ENCODE measurements at regions of chr1 and their contacts with region 1.

Region 1: DNA sequence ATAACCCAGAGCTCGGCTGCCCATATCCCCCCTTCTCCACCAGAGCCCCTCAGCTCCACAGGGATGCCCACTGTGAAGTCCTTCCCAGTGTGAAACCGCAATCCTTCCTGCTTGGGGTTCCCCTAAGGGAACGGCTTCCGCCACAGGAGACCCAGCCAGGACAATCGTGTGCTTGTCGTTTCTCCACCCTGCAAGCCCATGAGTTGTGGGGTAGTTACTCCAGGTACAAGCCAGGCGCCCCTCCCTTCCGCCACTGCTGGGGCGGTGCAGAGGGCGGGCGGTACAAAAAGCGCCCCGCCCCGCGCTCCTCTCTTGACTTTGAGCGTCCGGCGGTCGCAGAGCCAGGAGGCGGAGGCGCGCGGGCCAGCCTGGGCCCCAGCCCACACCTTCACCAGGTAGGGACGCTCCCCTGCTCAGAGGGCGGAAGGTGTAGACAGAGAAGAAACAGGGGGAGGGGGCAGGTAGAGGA is at the start of gene TINAGL1:
- DNase-seq: peak; percentile 83
- total RNA-seq, gene TINAGL1: 110 to 123 TPM

Region 2: DNA sequence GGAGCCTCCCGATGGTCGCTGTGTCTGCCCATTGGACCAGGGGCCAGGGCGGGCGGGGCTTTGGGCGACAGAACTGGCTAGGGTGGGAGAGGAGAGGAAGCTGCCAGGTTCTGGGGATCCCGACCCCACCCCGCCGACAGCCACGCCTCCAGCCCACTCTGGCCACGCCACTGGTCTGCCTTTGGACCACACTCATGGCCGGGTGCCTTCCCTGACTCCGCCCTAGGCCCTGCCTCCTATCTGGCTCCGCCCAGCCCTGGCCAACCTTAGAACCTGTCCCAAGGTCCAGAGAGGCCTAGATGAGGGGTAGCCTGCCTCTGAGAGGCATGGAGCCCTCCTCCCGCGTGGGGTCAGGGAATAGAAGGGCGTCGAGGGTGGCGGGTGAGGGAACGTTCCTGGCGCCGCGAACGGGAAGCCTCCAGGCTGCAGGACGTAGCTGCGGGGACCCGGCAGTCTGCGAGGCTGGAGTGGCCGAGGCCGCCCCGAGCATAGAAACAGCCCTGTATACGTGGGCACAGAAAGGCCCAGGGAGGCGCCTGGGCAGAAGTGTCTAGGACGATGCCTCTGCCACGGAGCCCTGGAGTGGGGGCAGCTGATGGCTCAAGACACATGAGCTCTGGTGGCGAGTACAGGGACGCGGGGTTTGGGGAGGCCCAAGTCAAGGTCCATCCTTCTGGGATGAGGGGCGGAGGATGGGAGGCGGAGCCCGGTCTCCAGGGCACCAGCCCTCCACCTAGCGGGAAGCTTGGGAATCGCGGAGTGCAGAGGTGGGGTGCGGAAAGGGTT is 139.0 kb after region 1 on chr1:
- intact Hi-C with region 1: loop called in 1 of 2 experiments (anchors 10 kb)
- DNase-seq: peak; percentile 98

Measured in posterior vena cava (tissue), 2 donors.